Lower leg skin (tissue), 4 donors: ENCODE measurements at regions of chr17 and their contacts with region 1.

Region 1: GRCh38 chr17:67390646-67391384 is 13.7 kb downstream of the PITPNC1 start:
- DNase-seq: no peak
- H3K4me3 ChIP-seq: no peak overlapping the region
- CTCF ChIP-seq: no peak
- POLR2A ChIP-seq: no peak

Region 2: GRCh38 chr17:67289181-67289876 is 101.5 kb before region 1 on chr17:
- intact Hi-C with region 1: no loop called
- DNase-seq: peak; percentile 38 to 86
- H3K4me3 ChIP-seq: no peak overlapping the region
- CTCF ChIP-seq: no peak
- POLR2A ChIP-seq: no peak

Region 3: DNA sequence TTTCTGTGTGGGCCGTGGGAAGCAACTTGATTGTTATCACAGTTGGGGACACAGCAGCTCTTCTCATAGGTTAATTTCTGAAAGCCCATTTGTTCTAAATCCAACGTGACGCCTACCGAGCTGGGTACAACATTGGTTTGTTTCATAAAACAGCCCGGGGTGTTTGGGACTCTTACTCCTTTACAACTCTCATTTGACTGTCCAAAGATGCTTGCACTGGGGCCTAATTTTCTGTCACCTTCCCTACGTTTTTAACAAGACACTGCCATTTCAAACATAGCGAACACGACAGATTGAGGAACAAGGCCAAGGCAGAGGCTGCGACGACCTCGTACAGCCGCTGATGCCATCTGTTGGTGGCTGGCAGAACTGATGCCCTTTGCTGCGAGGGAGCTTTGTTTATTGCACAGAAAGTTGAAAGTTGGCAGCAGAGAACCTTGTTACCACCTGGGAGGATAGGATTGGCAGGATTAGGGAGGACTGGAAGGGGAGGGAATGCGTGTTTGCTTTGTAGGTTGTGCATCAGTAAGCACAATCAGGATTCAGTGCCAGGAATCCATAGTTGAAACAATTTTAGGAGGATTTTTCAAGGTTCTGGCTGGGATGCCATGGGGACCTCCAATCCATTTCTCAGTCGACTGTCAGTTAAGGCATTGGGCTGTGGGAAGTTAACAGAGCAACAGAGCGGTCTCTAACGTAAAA is 84.6 kb after region 1 on chr17:
- intact Hi-C with region 1: loop called (anchors 10 kb)
- DNase-seq: peak; percentile 79 to 94
- H3K4me3 ChIP-seq: no peak overlapping the region
- CTCF ChIP-seq: peak in 1 of 3 donors; percentile 75
- POLR2A ChIP-seq: no peak